Activated B cell treated with CpG ODN at 0.5 μM for 24 hours (primary cell): ENCODE measurements at regions of chr17 and their contacts with region 1.

Region 1: DNA sequence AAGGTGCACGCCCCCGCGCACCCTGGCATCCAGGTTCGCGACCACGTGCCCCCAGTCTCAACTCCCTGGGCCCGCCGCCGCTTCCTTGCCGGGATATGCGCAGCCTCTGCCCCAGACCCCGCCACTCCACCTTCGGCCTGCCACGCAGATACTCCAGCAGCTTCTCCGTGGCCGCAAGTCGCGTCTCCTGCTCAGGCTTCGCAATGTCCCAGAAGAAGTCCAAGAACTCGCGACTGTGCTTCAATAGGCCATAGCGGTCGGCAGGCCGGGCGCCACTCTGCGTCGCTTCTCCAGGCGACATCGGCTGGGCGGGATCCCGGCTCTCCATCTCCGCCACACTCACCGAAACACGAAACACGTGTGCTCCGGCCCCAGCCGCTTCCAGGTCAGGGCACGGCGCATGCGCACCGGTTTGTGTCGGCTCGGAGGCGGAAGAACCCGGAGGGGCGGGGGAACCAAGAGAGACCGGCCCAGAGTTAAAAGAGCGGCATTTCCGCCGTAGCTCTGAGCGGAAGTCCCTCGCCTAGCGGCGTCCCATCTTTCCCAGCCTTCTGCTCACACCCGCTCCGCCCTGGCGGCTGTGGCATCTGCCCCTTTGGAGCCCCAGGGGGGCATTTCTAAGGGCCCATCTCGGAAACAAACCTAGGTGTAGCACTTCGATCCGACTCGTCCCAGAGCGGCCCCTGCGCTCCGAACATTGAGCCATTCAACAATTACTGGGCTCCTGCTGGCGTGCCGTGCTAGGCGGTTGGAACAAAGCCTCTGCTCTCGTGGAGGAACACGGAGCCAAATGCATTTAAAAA is at the start of gene MYBBP1A:
- DNase-seq: peak; percentile 94
- ATAC-seq: peak; percentile 95
- H3K4me3 Mint-ChIP-seq: peak within 1 kb of the TSS; percentile 96
- H3K27ac Mint-ChIP-seq: peak within 1 kb of the TSS; percentile 98
- H3K4me1 Mint-ChIP-seq: peaks cover 28% of the 10 kb centered on the region
- H3K27me3 Mint-ChIP-seq: no peaks in the 10 kb centered on the region
- CTCF ChIP-seq: no peak
- total RNA-seq, gene MYBBP1A: 90.3 and 108 TPM in 2 replicates

Region 2: GRCh38 chr17:4100883-4101756 is 454.1 kb before region 1 on chr17:
- CTCF ChIA-PET with region 1: no interaction called
- POLR2A ChIA-PET with region 1: no interaction called
- intact Hi-C with region 1: no loop called
- DNase-seq: no peak
- ATAC-seq: peak; percentile 65
- H3K4me3 Mint-ChIP-seq: no peak overlapping the region
- H3K27ac Mint-ChIP-seq: peak overlapping the region; percentile 81
- H3K4me1 Mint-ChIP-seq: peaks cover 12% of the 10 kb centered on the region
- H3K27me3 Mint-ChIP-seq: no peaks in the 10 kb centered on the region
- CTCF ChIP-seq: no peak

Region 3: DNA sequence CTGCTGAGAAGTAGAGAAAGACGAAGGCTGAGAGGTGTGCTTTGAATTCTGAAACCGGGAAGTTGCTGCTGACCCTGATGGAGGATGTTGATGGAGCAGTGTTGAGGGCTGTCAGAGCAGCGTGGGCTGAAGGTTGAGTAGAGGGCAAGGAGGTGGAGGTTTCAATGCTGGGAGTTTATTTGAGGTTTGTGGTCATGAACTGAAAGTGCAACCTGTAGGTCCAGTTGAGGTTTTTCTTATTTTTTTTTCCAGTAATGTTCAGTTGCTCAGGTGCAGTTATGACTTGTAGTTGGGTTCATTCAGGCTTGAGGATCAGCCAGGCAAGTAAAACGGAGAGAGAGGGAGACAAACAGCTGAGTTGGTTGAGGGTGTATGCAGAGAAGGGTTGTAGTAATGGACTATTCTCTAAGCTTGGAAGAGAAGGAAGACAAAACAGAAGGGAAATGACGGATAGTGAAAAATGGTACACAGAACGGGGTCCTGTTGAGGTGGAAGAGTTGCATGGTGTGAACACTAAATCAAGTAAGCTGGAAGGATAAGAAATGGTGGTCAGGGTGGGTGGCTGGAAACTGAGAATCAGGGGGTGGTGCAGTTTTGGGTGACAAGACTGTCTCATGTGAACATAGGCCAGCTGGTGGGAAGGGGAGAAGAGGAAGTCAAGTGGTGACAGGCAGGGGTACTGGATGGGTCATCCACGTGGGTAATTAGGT is 180.0 kb before region 1 on chr17:
- CTCF ChIA-PET with region 1: no interaction called
- POLR2A ChIA-PET with region 1: no interaction called
- intact Hi-C with region 1: no loop called
- DNase-seq: no peak
- ATAC-seq: peak; percentile 88
- H3K4me3 Mint-ChIP-seq: peak overlapping the region; percentile 53
- H3K27ac Mint-ChIP-seq: peak overlapping the region; percentile 85
- H3K4me1 Mint-ChIP-seq: peaks cover 45% of the 10 kb centered on the region
- H3K27me3 Mint-ChIP-seq: no peaks in the 10 kb centered on the region
- CTCF ChIP-seq: no peak

Region 4: GRCh38 chr17:4625181-4625617 is 70.0 kb after region 1 on chr17:
- CTCF ChIA-PET with region 1: no interaction called
- POLR2A ChIA-PET with region 1: interaction called, 11 read pairs
- intact Hi-C with region 1: no loop called
- DNase-seq: no peak
- ATAC-seq: no peak
- H3K4me3 Mint-ChIP-seq: no peak overlapping the region
- H3K27ac Mint-ChIP-seq: no peak overlapping the region
- H3K4me1 Mint-ChIP-seq: peaks cover 2% of the 10 kb centered on the region
- H3K27me3 Mint-ChIP-seq: peaks cover 10% of the 10 kb centered on the region
- CTCF ChIP-seq: no peak

Region 5: GRCh38 chr17:4997302-4998026 is 442.3 kb after region 1 on chr17 and contains the starts of genes INCA1 and KIF1C:
- CTCF ChIA-PET with region 1: no interaction called
- POLR2A ChIA-PET with region 1: no interaction called
- intact Hi-C with region 1: loop called (anchors 5 kb)
- DNase-seq: peak; percentile 95
- ATAC-seq: peak; percentile 95
- H3K4me3 Mint-ChIP-seq: peak within 1 kb of the TSS; percentile 85
- H3K27ac Mint-ChIP-seq: peak within 1 kb of the TSS; percentile 90
- H3K4me1 Mint-ChIP-seq: peaks cover 20% of the 10 kb centered on the region
- H3K27me3 Mint-ChIP-seq: no peaks in the 10 kb centered on the region
- CTCF ChIP-seq: no peak
- total RNA-seq, gene INCA1: 0.17 and 0.44 TPM in 2 replicates
- total RNA-seq, gene KIF1C: 62.6 and 63.8 TPM in 2 replicates